PC-9 (cell line): ENCODE measurements at regions of chr1 and their contacts with region 1.

Region 1: GRCh38 chr1:61221642-61222041 is 139.3 kb downstream of the NFIA start:
- DNase-seq: no peak
- H3K4me3 ChIP-seq: no peak overlapping the region
- H3K27ac ChIP-seq: no peak overlapping the region
- H3K4me1 ChIP-seq: peaks cover 13% of the 10 kb centered on the region
- H3K27me3 ChIP-seq: no peaks in the 10 kb centered on the region
- CTCF ChIP-seq: no peak

Region 2: DNA sequence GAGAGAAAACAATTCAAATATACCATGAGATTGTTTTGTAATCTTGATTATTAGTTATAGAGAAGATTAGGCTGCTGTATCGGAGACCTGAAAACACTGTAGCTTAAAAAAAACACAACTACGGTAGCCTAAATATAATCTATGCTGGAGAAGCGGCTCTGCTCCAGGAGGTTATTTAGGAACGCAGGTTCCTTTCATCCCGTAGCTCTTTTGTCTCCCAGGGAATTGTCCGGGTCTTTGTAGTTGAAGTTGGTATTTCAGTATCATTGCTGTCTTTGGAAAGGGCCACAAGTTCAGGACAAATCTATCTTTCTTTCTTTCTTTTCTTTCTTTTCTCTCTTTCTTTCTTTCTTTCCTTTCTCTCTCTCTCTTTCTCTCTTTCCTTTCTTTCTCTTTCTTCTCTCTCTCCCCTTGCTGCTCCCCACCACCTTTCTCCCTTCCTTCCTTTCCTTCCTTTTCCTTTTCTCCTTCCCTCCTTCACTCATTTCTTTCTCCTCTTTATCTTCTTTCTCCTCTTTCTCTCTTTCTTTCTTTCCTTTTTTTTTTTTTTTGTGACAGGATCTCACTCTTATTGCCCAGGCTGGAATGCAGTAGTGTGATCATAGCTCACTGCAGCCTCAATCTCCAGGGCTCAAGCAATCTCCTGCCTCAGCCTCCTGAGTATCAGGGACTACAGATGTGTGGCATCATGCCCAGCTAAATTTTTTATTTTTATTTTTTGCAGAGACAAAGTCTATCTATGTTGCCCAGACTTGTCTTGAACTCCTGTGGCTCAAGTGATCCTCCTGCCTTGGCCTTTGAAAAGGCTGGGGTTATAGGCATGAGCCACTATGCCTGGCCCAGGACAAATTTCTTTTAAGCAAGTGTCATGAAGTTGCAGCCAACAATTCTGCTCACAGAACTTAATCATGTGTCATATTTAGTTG is 150.2 kb before region 1 on chr1:
- CTCF ChIA-PET with region 1: no interaction called
- POLR2A ChIA-PET with region 1: interaction called, 14 read pairs
- intact Hi-C with region 1: no loop called
- DNase-seq: no peak
- H3K4me3 ChIP-seq: no peak overlapping the region
- H3K27ac ChIP-seq: no peak overlapping the region
- H3K4me1 ChIP-seq: peaks cover 34% of the 10 kb centered on the region
- H3K27me3 ChIP-seq: no peaks in the 10 kb centered on the region
- CTCF ChIP-seq: no peak

Region 3: DNA sequence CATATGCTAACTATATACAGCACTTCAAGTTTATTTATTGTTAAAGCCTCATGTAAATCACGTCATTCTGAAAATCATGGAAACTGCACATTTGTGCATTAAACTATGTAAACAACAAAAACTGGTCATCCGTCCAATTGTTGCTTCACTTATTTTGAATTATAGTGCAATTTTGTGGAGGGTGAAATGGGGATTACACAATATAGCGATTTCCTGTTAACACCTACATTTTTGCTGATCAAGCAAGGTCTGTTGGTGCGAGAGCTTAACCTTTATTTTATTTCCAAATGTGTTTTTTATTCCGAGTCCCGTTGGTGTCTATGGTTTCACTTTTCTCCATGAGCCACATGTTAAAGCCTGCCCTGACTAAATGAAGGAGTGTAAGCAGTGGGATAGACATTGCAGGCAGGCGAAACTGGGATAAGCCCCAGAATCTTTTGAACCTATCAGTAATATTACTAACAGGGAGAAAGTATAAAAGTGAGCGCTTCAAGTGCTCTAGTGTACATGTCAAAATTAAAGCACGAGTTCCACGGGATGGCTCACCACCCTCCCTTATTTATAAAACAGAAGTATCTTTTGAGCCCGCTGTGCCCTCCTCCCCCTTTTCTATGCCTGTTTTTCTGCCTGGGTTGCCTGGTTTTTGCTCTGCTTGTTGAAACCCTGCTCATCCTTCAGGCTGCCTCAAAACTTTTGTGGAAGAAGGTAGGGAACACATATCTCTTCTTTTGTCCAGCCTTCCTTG is 18.6 kb before region 1 on chr1:
- CTCF ChIA-PET with region 1: no interaction called
- POLR2A ChIA-PET with region 1: no interaction called
- intact Hi-C with region 1: no loop called
- DNase-seq: no peak
- H3K4me3 ChIP-seq: no peak overlapping the region
- H3K27ac ChIP-seq: no peak overlapping the region
- H3K4me1 ChIP-seq: no peaks in the 10 kb centered on the region
- H3K27me3 ChIP-seq: no peaks in the 10 kb centered on the region
- CTCF ChIP-seq: no peak

Region 4: DNA sequence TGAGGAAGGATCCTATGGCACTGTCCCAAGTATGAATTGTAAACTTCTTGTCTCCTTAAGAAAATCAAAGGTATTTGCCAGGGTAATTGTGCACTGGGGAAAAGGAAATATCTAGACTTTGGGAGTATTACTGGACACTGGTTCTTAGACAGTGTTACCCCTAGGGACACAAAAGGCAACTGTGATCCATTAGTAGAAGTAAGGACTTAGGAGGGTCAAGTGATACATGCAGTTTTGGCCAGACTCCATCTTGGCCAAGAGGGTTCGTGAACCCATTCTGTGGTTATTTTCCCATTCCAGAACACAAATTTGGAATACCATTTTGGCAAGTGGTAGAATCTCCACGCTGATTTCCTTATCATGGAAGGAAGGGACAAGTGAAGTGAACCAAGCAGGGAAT is 405.2 kb after region 1 on chr1:
- CTCF ChIA-PET with region 1: no interaction called
- POLR2A ChIA-PET with region 1: no interaction called
- intact Hi-C with region 1: no loop called
- DNase-seq: no peak
- H3K4me3 ChIP-seq: no peak overlapping the region
- H3K27ac ChIP-seq: no peak overlapping the region
- H3K4me1 ChIP-seq: no peaks in the 10 kb centered on the region
- H3K27me3 ChIP-seq: no peaks in the 10 kb centered on the region
- CTCF ChIP-seq: no peak